Psoas muscle (tissue), 8 donors: ENCODE measurements at regions of chr5 and their contacts with region 1.

Region 1: DNA sequence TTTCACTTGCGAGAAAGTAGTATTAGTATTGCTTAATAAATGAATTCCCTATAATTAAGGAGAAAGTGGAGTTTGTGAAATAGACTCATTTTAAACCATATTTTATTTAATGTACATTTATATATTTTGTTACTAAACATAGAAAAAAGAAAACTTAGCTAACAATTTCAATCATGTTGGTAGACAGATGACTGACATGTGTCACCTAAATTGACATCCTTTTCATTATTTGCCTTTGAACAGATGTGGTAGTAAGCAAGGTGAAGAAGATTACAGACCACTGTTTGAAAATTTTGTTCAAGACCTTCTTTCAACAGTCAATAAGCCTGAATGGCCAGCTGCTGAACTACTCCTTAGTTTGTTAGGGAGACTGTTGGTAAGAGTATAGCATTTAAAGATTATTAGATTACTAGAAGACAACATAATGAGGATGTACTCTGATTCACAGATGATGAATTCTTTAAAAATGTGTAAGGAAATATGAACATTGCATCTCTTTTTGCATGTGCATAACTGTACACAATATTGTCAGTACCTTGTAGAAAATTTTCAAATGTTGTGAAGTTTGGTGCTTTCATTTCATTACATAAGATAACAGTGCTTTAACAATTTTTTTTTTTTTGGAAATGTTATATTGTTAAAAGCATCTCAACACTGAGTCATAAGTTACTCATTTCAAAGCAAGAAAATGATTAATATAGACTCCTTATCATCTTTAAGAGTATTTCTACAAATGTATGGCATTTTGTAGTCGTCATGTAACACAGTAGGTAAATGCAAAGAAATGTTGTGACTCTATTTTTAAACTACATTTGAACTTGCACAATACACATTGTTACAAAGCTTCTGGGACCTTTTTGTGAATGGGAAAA is 139.5 kb downstream of the NIPBL start:
- DNase-seq: no peak
- ATAC-seq: no peak
- H3K4me3 ChIP-seq: no peak overlapping the region
- H3K27ac ChIP-seq: no peak overlapping the region
- H3K4me1 ChIP-seq: no peaks in the 10 kb centered on the region
- H3K27me3 ChIP-seq: no peaks in the 10 kb centered on the region
- CTCF ChIP-seq: no peak

Region 2: DNA sequence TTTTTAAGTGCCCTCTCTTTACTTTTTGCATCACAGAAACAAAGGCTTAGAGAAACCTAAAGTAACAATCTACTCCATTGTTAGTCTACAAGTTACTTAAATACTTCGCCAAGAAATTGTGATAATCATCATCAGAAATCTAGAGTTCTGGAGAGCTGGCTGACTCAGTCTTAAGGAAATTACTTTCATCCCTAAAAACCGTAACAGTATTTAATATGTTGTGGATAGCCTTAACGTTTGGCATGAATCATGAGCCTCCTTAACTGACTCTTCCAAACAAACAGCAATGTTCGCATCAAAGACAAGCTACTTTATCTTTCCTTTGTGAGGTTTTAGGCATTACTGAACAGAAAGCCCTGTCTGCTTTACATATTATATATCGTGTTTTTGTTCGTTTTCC is 10.8 kb before region 1 on chr5:
- intact Hi-C with region 1: no loop called
- DNase-seq: no peak
- ATAC-seq: no peak
- H3K4me3 ChIP-seq: no peak overlapping the region
- H3K27ac ChIP-seq: no peak overlapping the region
- H3K4me1 ChIP-seq: no peaks in the 10 kb centered on the region
- H3K27me3 ChIP-seq: no peaks in the 10 kb centered on the region
- CTCF ChIP-seq: no peak

Region 3: DNA sequence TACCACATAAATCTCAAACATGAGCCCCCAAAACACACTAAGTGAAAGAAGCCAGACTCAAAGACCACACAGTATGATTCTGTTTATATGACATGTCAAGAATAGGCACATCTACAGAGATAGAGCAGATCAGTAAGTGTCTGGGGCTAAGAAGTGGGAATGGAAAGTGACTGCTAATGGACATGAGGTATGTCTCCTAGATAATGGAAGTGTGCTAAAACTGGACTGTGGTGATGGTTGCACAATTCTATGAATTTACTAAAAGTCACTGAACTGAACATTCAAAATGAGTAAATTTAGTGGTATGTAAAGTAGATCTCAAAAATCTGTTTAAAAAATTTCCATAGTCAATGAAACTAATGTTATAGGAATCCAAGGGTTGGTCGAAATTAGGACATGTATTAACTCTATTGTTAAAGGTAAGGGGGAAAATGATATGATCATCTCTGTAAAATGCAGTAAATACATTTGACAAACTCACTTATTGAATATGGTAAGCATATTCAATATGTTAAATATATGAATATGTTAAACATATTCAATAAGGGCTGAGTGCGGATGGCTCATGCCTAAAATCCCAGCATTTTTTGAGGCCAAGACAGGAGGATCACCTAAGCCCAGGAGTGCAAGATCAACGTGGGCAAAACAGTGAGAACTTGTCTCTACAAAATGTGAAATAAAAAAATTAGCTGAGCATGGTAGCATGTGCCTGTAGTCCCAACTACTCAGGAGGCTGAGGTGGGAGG is 303.2 kb after region 1 on chr5:
- intact Hi-C with region 1: loop called (anchors 10 kb)
- DNase-seq: no peak
- ATAC-seq: no peak
- H3K4me3 ChIP-seq: no peak overlapping the region
- H3K27ac ChIP-seq: no peak overlapping the region
- H3K4me1 ChIP-seq: no peaks in the 10 kb centered on the region
- H3K27me3 ChIP-seq: no peaks in the 10 kb centered on the region
- CTCF ChIP-seq: no peak